ENCODE measurements at regions of chr20 and their contacts with region 1.

Region 1: GRCh38 chr20:44310664-44311639 is at the start of gene FITM2:
- DNase-seq: peak; percentile 91
- H3K4me3 ChIP-seq: peak within 1 kb of the TSS; percentile 72 to 82 (median 78)
- H3K27ac ChIP-seq: peak within 1 kb of the TSS; percentile 70 to 83 (median 78)
- H3K4me1 ChIP-seq: peaks cover 14 to 27% (median 17%) of the 10 kb centered on the region in 3 donors
- H3K27me3 ChIP-seq: no peaks in the 10 kb centered on the region
- CTCF ChIP-seq: peak; percentile 89 to 99 (median 93)
- POLR2A ChIP-seq: peak in 2 of 4 donors; percentile 44 to 63
- total RNA-seq, gene FITM2: 2.1 to 4.8 (median 3.7) TPM

Region 2: GRCh38 chr20:44109951-44110361 is 201.0 kb before region 1 on chr20:
- intact Hi-C with region 1: loop called (anchors 10 kb)
- DNase-seq: no peak
- H3K4me3 ChIP-seq: no peak overlapping the region
- H3K27ac ChIP-seq: no peak overlapping the region
- H3K4me1 ChIP-seq: peaks cover 0 to 23% (median 11%) of the 10 kb centered on the region in 3 donors
- H3K27me3 ChIP-seq: peaks cover 0 to 20% (median 0%) of the 10 kb centered on the region in 4 donors
- CTCF ChIP-seq: no peak
- POLR2A ChIP-seq: no peak

Region 3: DNA sequence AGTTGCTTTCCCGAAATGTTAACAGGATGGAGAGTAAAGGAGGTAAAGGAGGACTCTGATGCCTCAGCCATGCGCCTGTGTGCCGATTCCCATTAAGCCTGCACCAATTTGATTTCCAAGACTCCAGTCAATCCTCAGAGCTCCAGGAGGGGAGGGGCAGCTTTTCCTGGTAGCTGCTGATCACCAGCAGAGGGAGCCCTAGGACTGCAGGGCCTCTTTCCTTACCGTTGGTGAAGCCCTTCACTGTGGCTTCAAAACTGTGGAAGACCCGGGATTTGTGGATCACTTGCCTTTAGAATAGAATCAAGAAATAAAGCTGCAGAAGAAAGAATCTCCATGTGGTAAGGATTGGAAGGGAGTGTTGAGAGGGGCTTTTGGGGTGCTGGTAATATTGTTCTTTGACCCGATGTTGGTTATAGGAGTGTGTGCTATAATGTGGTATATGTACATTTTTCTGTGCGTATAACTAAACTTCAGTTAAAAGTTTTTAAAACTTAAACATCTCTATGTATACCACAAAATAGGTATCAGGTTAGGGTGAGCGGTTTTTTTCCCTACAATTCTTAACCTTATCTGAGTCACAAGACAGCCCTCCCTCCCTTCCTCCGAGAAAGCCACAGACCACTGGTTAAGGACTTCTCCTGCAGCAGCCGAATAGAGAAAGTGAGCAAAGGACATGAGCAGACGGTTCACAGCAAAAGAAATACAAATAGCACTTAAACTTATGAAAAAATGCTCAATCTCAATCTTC is 93.4 kb before region 1 on chr20:
- intact Hi-C with region 1: loop called (anchors 2 kb)
- DNase-seq: no peak
- H3K4me3 ChIP-seq: no peak overlapping the region
- H3K27ac ChIP-seq: no peak overlapping the region
- H3K4me1 ChIP-seq: peaks cover 0 to 17% (median 0%) of the 10 kb centered on the region in 3 donors
- H3K27me3 ChIP-seq: no peaks in the 10 kb centered on the region
- CTCF ChIP-seq: peak; percentile 55 to 92 (median 83)
- POLR2A ChIP-seq: no peak

Region 4: DNA sequence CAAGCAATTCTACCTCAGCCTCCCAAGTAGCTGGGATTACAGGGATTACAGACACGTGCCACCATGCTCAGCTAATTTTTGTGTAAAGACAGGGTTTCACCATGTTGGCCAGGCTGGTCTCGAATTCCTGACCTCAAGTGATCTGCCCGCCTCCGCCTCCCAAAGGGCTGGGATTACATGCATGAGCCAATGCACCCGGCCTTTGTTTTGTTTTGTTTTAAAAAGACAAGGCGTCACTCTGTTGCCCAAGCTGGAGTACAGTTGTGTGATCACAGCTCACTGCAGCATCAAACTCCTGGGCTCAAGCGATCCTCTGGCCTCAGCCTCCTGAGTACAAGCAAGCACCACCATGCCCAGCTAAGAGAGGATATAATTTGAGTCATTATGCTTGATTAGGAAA is 205.5 kb after region 1 on chr20:
- intact Hi-C with region 1: no loop called
- DNase-seq: no peak
- H3K4me3 ChIP-seq: no peak overlapping the region
- H3K27ac ChIP-seq: peak overlapping the region in 3 of 4 donors; percentile 5 to 34 (median 19)
- H3K4me1 ChIP-seq: peaks cover 3 to 84% (median 46%) of the 10 kb centered on the region in 3 donors
- H3K27me3 ChIP-seq: no peaks in the 10 kb centered on the region
- CTCF ChIP-seq: no peak
- POLR2A ChIP-seq: no peak

Region 5: DNA sequence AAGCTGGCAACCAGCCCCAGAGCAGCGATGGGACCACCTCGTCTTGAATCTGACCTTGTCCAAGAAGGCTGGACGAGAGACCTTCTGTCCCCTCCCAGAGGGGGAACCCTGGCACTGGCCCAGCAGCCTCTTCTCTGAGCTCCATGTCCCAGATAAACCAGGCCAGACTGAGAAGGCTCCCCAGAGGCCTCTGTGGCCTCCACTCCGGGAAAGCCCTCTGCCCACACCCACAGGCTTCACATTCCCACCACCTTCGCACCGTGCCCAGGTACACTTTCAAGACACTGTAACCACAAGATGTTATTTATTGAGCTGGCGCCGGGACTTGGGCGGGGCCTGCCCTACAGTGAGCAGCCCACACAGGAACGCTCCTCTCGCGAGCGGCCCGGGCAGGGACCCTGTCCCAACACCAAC is 307.4 kb after region 1 on chr20:
- intact Hi-C with region 1: no loop called
- DNase-seq: no peak
- H3K4me3 ChIP-seq: no peak overlapping the region
- H3K27ac ChIP-seq: no peak overlapping the region
- H3K4me1 ChIP-seq: peaks cover 10 to 33% (median 29%) of the 10 kb centered on the region in 3 donors
- H3K27me3 ChIP-seq: no peaks in the 10 kb centered on the region
- CTCF ChIP-seq: no peak
- POLR2A ChIP-seq: no peak